Cardiac septum (tissue), 1 donor: ENCODE measurements at regions of chr11 and their contacts with region 1.

Region 1: GRCh38 chr11:27698872-27699474 is 1.3 kb downstream of the BDNF start:
- DNase-seq: peak; percentile 85

Region 2: DNA sequence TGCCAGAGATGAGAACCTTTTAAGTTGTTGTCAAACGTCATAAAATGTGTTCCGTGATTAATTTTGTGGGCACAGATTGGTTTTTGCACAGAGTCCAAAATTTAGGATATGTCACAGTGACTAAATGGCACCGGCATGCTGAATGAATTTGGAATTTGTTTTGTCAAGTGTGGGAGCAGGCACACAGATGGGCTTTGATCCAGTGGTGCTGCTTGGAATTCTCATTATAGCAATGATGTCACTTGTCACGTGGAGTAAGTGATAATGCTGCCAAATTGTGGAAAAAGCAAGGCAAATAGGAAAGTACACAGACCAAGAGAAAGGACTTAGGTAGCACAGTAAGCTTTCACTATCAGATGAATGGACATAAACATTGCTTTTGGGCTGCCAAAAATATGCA is 184.4 kb before region 1 on chr11:
- intact Hi-C with region 1: loop called (anchors 2 kb)
- DNase-seq: no peak

Region 3: GRCh38 chr11:27528711-27529110 is 170.3 kb before region 1 on chr11:
- intact Hi-C with region 1: loop called (anchors 5 kb)
- DNase-seq: no peak

Region 4: GRCh38 chr11:28107748-28108618 is 409.0 kb after region 1 on chr11 and contains the starts of genes KIF18A and METTL15:
- intact Hi-C with region 1: loop called (anchors 10 kb)
- DNase-seq: peak; percentile 100
- total RNA-seq, gene KIF18A: 0.27 TPM
- total RNA-seq, gene METTL15: 10.9 TPM

Region 5: GRCh38 chr11:28529540-28530410 is 830.8 kb after region 1 on chr11:
- intact Hi-C with region 1: loop called (anchors 5 kb)
- DNase-seq: no peak